ENCODE measurements at regions of chr6 and their contacts with region 1.

Region 1: GRCh38 chr6:52419809-52420670 is at the start of gene EFHC1:
- DNase-seq: peak; percentile 78 to 97
- ATAC-seq: peak; percentile 93 to 94
- H3K4me3 ChIP-seq: peak within 1 kb of the TSS; percentile 67
- H3K27ac ChIP-seq: peak within 1 kb of the TSS; percentile 91 to 93
- H3K4me1 ChIP-seq: peaks cover 44% of the 10 kb centered on the region
- CTCF ChIP-seq: no peak
- EP300 ChIP-seq: no peak
- POLR2A ChIP-seq: peak; percentile 91
- RAD21 ChIP-seq: no peak
- polyA plus RNA-seq, gene EFHC1: 43.5 and 46.7 TPM in 2 replicates

Region 2: GRCh38 chr6:52491203-52492069 is 71.4 kb after region 1 on chr6:
- CTCF ChIA-PET with region 1: no interaction called
- POLR2A ChIA-PET with region 1: no interaction called
- DNase-seq: no peak
- ATAC-seq: no peak
- H3K4me3 ChIP-seq: no peak overlapping the region
- H3K27ac ChIP-seq: no peak overlapping the region
- H3K4me1 ChIP-seq: no peaks in the 10 kb centered on the region
- CTCF ChIP-seq: no peak
- EP300 ChIP-seq: no peak
- POLR2A ChIP-seq: no peak
- RAD21 ChIP-seq: no peak

Region 3: DNA sequence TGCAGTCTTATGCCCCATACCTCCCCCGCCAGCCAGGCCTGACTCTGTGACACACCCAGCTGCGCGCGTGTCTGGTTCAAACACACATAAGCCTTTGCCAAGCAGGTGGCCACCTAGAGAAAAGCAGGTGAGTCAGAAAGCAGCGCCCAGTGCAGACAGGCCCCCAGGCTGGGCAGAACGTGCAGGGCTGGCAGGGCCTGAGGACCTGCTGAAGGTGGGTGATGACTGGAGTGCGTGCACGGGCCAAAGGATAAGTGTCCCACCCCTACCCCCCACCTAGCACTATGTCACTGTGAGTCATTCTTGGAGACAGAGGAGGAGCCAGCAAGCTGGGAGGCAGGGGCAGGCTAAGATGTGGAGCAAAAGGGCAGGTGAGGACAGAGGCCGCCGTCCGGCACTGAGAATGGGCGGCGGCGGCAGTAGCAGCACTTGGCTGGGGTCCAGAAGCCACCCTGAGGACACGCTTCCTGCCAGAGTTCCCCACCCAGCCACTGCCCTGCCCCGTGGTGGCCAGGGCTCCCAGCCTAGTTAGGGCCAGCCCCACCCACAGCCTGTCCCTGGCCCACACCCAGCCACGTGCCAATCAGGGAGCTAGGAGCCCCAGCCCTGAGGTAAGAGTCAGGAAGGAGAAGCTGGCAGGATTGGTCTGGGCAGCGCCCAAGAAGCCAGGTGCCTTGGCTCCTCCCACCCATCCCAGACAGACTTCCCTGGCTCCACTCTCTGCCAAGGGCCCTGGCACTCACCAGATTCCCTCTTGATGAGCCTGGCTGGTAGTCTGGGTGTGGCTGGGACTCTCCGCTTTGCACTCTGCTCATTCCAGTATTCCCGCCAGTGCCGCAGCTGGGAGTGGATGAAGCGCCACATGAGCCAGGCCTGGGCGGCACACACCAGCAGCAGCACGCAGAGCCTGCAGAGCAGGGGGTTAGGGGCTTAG is 84.1 kb after region 1 on chr6:
- CTCF ChIA-PET with region 1: interaction called, 4 read pairs
- POLR2A ChIA-PET with region 1: interaction called, 12 read pairs
- DNase-seq: peak; percentile 89 to 97
- ATAC-seq: peak; percentile 82 to 90
- H3K4me3 ChIP-seq: peak overlapping the region; percentile 14; the same call in 1 of the 3 replicates
- H3K27ac ChIP-seq: peak overlapping the region; percentile 82 to 97
- H3K4me1 ChIP-seq: peaks cover 48% of the 10 kb centered on the region
- CTCF ChIP-seq: no peak
- EP300 ChIP-seq: peak; percentile 56 to 79; a peak in 2 of 5 replicates
- POLR2A ChIP-seq: no peak
- RAD21 ChIP-seq: peak in 1 of 2 experiments; percentile 11; a peak in 3 of 5 replicates

Region 4: GRCh38 chr6:52590152-52590931 is 170.3 kb after region 1 on chr6:
- CTCF ChIA-PET with region 1: interaction called, 50 read pairs
- POLR2A ChIA-PET with region 1: interaction called, 10 read pairs
- DNase-seq: no peak
- ATAC-seq: peak; percentile 71 to 73; a peak in 5 of 6 replicates
- H3K4me3 ChIP-seq: no peak overlapping the region
- H3K27ac ChIP-seq: peak overlapping the region in 1 of 2 experiments; percentile 60; a peak in 2 of 6 replicates
- H3K4me1 ChIP-seq: peaks cover 34% of the 10 kb centered on the region
- CTCF ChIP-seq: peak; percentile 27
- EP300 ChIP-seq: no peak
- POLR2A ChIP-seq: no peak
- RAD21 ChIP-seq: peak; percentile 44 to 56

Region 5: GRCh38 chr6:52647199-52647598 is 227.2 kb after region 1 on chr6:
- CTCF ChIA-PET with region 1: interaction called, 31 read pairs
- POLR2A ChIA-PET with region 1: no interaction called
- DNase-seq: no peak
- ATAC-seq: no peak
- H3K4me3 ChIP-seq: no peak overlapping the region
- H3K27ac ChIP-seq: no peak overlapping the region
- H3K4me1 ChIP-seq: no peaks in the 10 kb centered on the region
- CTCF ChIP-seq: no peak
- EP300 ChIP-seq: no peak
- POLR2A ChIP-seq: no peak
- RAD21 ChIP-seq: no peak

Region 6: GRCh38 chr6:52663120-52663935 is 243.3 kb after region 1 on chr6:
- CTCF ChIA-PET with region 1: interaction called, 86 read pairs
- POLR2A ChIA-PET with region 1: no interaction called
- DNase-seq: peak; percentile 49 to 69
- ATAC-seq: peak; percentile 41 to 60; a peak in 4 of 6 replicates
- H3K4me3 ChIP-seq: peak overlapping the region; percentile 57
- H3K27ac ChIP-seq: peak overlapping the region; percentile 54 to 95; a peak in 4 of 6 replicates
- H3K4me1 ChIP-seq: peaks cover 11% of the 10 kb centered on the region; the same call in 1 of the 3 replicates
- CTCF ChIP-seq: peak; percentile 86
- EP300 ChIP-seq: no peak
- POLR2A ChIP-seq: no peak
- RAD21 ChIP-seq: peak; percentile 90 to 94

Measured in A549 (cell line).